ENCODE measurements at regions of chr12 and their contacts with region 1.

Region 1: DNA sequence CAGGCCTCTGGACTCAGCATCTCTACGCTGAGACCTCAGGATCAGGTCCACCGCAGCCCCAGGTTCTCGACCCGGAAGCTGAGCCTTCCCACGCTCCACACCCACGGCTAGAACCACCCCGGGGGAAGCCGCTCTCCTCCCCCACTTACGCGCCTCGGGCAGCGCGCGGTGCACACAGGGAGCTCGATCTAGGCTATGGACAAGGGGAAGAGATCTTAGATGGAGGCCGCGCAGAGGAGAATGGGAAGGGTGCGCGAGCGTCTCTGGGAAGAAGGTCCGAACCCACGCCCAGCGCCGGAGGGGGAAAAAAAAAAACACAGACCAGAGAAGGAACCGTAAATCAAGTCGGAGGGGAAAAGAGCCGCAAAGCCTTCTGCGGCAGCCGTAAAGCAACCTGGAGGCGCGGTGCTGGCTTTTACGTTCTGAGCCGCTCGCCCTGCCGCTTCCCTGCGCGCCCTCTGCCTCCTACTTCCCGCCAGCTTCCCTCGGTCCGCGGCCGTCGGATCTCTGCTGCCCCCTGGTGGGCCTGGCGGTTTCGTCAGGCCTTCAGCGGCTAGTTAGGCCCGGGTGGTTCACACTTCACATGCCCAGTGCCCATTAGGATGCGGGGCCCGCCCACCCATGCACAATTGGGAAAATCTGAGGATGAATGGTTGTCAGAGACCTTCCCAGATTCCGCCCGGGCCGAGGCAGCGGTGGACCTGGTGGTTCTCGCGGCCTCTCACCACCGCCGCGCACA is at the start of gene RAD52:
- DNase-seq: peak; percentile 99
- ATAC-seq: peak; percentile 86
- H3K4me3 ChIP-seq: peak within 1 kb of the TSS; percentile 67 to 91 (median 74)
- H3K4me3 Mint-ChIP-seq: peak within 1 kb of the TSS; percentile 88
- H3K27ac ChIP-seq: peak within 1 kb of the TSS; percentile 82 to 84
- H3K27ac Mint-ChIP-seq: peak within 1 kb of the TSS; percentile 90
- H3K4me1 ChIP-seq: peaks cover 0 to 13% of the 10 kb centered on the region in 2 donors
- H3K4me1 Mint-ChIP-seq: peaks cover 27% of the 10 kb centered on the region
- H3K27me3 ChIP-seq: no peaks in the 10 kb centered on the region
- H3K27me3 Mint-ChIP-seq: no peaks in the 10 kb centered on the region
- CTCF ChIP-seq: peak; percentile 99
- total RNA-seq, gene RAD52: 22.9 and 27.6 TPM in 2 replicates

Region 2: GRCh38 chr12:569803-570434 is 379.7 kb before region 1 on chr12:
- CTCF ChIA-PET with region 1: interaction called, 9 read pairs
- POLR2A ChIA-PET with region 1: interaction called, 3 read pairs
- intact Hi-C with region 1: loop called (anchors 1 kb)
- DNase-seq: peak; percentile 87
- ATAC-seq: peak; percentile 97
- H3K4me3 ChIP-seq: peak overlapping the region; percentile 21 to 72 (median 53)
- H3K4me3 Mint-ChIP-seq: peak overlapping the region; percentile 91
- H3K27ac ChIP-seq: no peak overlapping the region
- H3K27ac Mint-ChIP-seq: peak overlapping the region; percentile 32
- H3K4me1 ChIP-seq: peaks cover 4 to 14% of the 10 kb centered on the region in 2 donors
- H3K4me1 Mint-ChIP-seq: peaks cover 4% of the 10 kb centered on the region
- H3K27me3 ChIP-seq: no peaks in the 10 kb centered on the region
- H3K27me3 Mint-ChIP-seq: no peaks in the 10 kb centered on the region
- CTCF ChIP-seq: peak; percentile 94

Region 3: DNA sequence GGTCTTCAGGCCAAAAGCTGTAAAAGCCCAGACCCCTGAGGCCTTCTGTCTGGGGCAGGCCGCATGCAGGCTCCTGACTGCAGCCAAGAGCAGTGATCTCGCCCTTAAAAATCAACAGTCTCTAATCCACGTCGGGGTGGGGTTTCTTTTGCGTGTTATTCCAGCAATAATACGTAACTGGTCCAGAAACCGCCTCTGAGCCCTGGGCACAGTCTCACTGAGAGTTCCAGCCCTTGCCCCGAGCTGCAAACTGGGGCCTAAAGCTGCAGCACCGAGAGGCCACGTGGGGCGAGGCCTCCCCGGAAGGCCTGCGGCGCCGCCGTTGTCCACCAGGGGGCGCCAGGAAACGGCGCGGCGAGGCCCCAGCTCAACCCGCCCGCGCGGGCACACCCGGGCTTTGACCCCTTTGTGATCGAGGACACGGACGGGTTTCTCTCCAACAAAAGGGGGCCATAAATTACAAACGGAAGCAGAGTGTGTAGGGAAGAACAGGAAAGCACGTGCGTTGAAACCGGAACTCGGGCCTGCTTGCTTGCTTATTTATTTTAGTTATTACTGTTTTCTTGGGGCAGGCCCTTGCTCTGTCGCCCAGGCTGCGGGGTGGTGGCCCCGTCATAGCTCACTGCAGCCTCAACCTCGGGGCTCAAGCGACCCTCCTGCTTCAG is 373.5 kb before region 1 on chr12:
- CTCF ChIA-PET with region 1: interaction called, 9 read pairs
- POLR2A ChIA-PET with region 1: no interaction called
- intact Hi-C with region 1: loop called (anchors 2 kb)
- DNase-seq: peak; percentile 88
- ATAC-seq: peak; percentile 99
- H3K4me3 ChIP-seq: peak overlapping the region in 4 of 5 experiments; percentile 20 to 34 (median 26)
- H3K4me3 Mint-ChIP-seq: peak overlapping the region; percentile 79
- H3K27ac ChIP-seq: no peak overlapping the region
- H3K27ac Mint-ChIP-seq: peak overlapping the region; percentile 65
- H3K4me1 ChIP-seq: peaks cover 8 to 12% of the 10 kb centered on the region in 2 donors
- H3K4me1 Mint-ChIP-seq: peaks cover 8% of the 10 kb centered on the region
- H3K27me3 ChIP-seq: no peaks in the 10 kb centered on the region
- H3K27me3 Mint-ChIP-seq: no peaks in the 10 kb centered on the region
- CTCF ChIP-seq: peak; percentile 97

Region 4: GRCh38 chr12:823028-823698 is 126.5 kb before region 1 on chr12:
- CTCF ChIA-PET with region 1: interaction called, 5 read pairs
- POLR2A ChIA-PET with region 1: interaction called, 7 read pairs
- intact Hi-C with region 1: loop called (anchors 2 kb)
- DNase-seq: peak; percentile 78
- ATAC-seq: peak; percentile 94
- H3K4me3 ChIP-seq: no peak overlapping the region
- H3K4me3 Mint-ChIP-seq: peak overlapping the region; percentile 1
- H3K27ac ChIP-seq: peak overlapping the region; percentile 40 to 57
- H3K27ac Mint-ChIP-seq: peak overlapping the region; percentile 32
- H3K4me1 ChIP-seq: peaks cover 16 to 23% of the 10 kb centered on the region in 2 donors
- H3K4me1 Mint-ChIP-seq: peaks cover 35% of the 10 kb centered on the region
- H3K27me3 ChIP-seq: no peaks in the 10 kb centered on the region
- H3K27me3 Mint-ChIP-seq: no peaks in the 10 kb centered on the region
- CTCF ChIP-seq: no peak

Region 5: GRCh38 chr12:913919-914708 is 35.5 kb before region 1 on chr12:
- CTCF ChIA-PET with region 1: interaction called, 4 read pairs
- POLR2A ChIA-PET with region 1: no interaction called
- intact Hi-C with region 1: loop called (anchors 5 kb)
- DNase-seq: no peak
- ATAC-seq: no peak
- H3K4me3 ChIP-seq: no peak overlapping the region
- H3K4me3 Mint-ChIP-seq: no peak overlapping the region
- H3K27ac ChIP-seq: peak overlapping the region in 1 of 2 donors; percentile 3
- H3K27ac Mint-ChIP-seq: peak overlapping the region; percentile 33
- H3K4me1 ChIP-seq: peaks cover 0 to 6% of the 10 kb centered on the region in 2 donors
- H3K4me1 Mint-ChIP-seq: peaks cover 13% of the 10 kb centered on the region
- H3K27me3 ChIP-seq: no peaks in the 10 kb centered on the region
- H3K27me3 Mint-ChIP-seq: no peaks in the 10 kb centered on the region
- CTCF ChIP-seq: no peak

Region 6: GRCh38 chr12:990661-991349 is 41.2 kb after region 1 on chr12 and contains the start of gene ERC1:
- CTCF ChIA-PET with region 1: interaction called, 31 read pairs
- POLR2A ChIA-PET with region 1: interaction called, 27 read pairs
- intact Hi-C with region 1: loop called (anchors 1 kb)
- DNase-seq: peak; percentile 93
- ATAC-seq: peak; percentile 87
- H3K4me3 ChIP-seq: peak within 1 kb of the TSS; percentile 60 to 97 (median 88)
- H3K4me3 Mint-ChIP-seq: peak within 1 kb of the TSS; percentile 98
- H3K27ac ChIP-seq: peak within 1 kb of the TSS; percentile 54 to 90
- H3K27ac Mint-ChIP-seq: peak within 1 kb of the TSS; percentile 97
- H3K4me1 ChIP-seq: peaks cover 16 to 18% of the 10 kb centered on the region in 2 donors
- H3K4me1 Mint-ChIP-seq: peaks cover 24% of the 10 kb centered on the region
- H3K27me3 ChIP-seq: no peaks in the 10 kb centered on the region
- H3K27me3 Mint-ChIP-seq: no peaks in the 10 kb centered on the region
- CTCF ChIP-seq: no peak
- total RNA-seq, gene ERC1: 77.6 and 90.0 TPM in 2 replicates

Measured in B cell (primary cell).